Activated B cell treated with CpG ODN at 0.5 μM for 24 hours (primary cell): ENCODE measurements at regions of chr12 and their contacts with region 1.

Region 1: DNA sequence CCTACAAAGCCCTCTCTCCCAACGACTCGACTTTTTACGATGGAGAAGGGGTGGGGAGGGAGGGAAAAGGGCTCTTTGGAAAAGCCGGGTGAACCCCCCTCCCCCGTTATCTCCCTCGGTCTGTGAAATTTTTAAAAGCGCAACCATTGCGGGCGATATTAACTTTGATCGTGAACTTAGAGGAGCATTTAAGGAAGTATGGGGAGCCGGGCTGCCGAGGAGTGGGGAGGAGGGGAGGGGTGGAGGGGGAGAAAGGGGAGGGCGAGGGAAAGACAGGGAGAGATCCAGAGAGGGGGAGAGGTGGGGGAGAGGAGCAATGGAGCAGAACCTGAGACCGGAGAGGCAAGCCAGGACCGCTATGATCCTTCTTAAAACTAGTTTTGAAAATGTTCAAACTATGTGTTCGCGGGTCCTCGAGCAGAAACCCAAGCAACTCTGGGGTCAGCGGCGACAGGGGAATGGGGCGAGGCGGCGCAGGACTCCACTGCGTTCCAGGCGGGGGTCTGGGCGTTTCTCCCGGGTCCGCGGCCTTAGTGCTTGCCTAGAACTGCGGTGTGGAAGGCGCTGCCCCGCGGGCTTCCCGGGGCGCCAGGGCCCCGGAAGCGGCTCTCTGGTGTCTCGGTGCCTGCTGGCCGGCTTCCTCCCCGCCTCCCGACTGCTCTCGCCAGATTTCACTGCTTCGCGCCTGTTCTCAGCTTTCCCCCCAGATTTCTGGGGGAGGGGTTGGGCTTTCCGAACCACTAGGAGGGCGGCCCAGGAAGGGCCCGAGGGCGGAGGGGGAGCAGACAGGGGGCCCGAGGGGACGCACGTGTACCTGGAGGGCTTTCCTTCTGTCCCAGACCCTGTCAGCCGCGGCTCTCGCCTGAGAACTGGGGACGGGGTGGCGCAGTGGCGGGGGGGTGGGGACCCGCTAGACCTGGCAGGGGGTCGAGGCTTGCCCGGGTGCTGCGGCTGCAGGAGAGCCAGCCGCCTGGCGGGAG is at the start of gene HOTAIR:
- DNase-seq: no peak
- ATAC-seq: peak; percentile 45
- H3K4me3 Mint-ChIP-seq: peak within 1 kb of the TSS; percentile 66
- H3K27ac Mint-ChIP-seq: peak within 1 kb of the TSS; percentile 50
- H3K4me1 Mint-ChIP-seq: peaks cover 15% of the 10 kb centered on the region
- H3K27me3 Mint-ChIP-seq: peaks cover 71% of the 10 kb centered on the region
- CTCF ChIP-seq: no peak
- total RNA-seq, gene HOTAIR: not detected in 2 replicates

Region 2: GRCh38 chr12:53938326-53939140 is 35.8 kb before region 1 on chr12 and contains the start of gene HOXC13:
- CTCF ChIA-PET with region 1: no interaction called
- POLR2A ChIA-PET with region 1: no interaction called
- intact Hi-C with region 1: loop called (anchors 5 kb)
- DNase-seq: no peak
- ATAC-seq: no peak
- H3K4me3 Mint-ChIP-seq: no peak within 1 kb of the TSS
- H3K27ac Mint-ChIP-seq: no peak within 1 kb of the TSS
- H3K4me1 Mint-ChIP-seq: peaks cover 9% of the 10 kb centered on the region
- H3K27me3 Mint-ChIP-seq: peaks cover 75% of the 10 kb centered on the region
- CTCF ChIP-seq: no peak
- total RNA-seq, gene HOXC13: not detected in 2 replicates